HEK293 (cell line): ENCODE measurements at regions of chrX and their contacts with region 1.

Region 1: GRCh38 chrX:131677655-131678628 is 134.1 kb downstream of the OR13H1 start:
- H3K4me3 ChIP-seq: no peak overlapping the region
- H3K27ac ChIP-seq: no peak overlapping the region
- H3K4me1 ChIP-seq: no peaks in the 10 kb centered on the region
- CTCF ChIP-seq: peak; percentile 74

Region 2: DNA sequence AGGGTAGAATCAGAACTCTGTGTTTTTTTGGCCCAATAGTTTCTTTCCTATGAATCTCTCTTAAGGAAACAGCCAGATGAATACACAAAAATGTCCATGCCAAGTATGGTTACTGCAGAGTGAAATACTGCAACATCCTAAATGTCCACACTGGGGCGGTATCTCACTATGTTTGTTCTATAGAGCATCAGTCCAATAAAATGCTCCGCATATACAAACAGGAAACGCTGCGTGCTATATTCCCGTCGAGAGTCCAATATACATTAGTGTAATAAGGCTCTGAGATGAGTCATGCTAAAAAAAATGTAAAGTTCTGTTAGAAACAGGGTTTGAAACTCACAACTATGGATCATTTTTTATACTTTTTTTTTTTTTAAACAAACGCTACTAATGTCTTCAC is 702.0 kb before region 1 on chrX:
- CTCF ChIA-PET with region 1: interaction called, 34 read pairs
- POLR2A ChIA-PET with region 1: no interaction called
- H3K4me3 ChIP-seq: no peak overlapping the region
- H3K27ac ChIP-seq: no peak overlapping the region
- H3K4me1 ChIP-seq: no peaks in the 10 kb centered on the region
- CTCF ChIP-seq: peak; percentile 53; the same call in 1 of the 2 replicates

Region 3: DNA sequence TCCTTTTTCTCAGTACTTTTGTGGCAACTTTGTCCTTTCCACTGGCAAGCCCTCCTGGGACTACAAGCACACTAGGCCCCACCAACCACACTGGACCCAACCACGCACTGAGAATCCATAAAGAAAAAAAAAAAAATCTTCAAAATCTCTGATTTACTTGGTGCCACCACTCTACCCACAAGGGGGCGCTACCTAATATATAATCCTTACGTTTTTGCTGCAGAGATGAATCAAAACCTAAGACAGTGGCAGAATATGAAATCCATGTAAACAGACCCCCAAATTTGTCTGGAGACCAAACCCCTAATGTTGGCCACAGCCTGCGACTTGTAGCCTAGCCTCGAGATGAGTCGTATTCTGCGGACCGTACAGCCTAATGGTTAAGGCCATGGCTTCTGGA is 683.3 kb before region 1 on chrX:
- CTCF ChIA-PET with region 1: interaction called, 13 read pairs
- POLR2A ChIA-PET with region 1: no interaction called
- H3K4me3 ChIP-seq: no peak overlapping the region
- H3K27ac ChIP-seq: no peak overlapping the region
- H3K4me1 ChIP-seq: no peaks in the 10 kb centered on the region
- CTCF ChIP-seq: no peak

Region 4: GRCh38 chrX:131589032-131589431 is 88.9 kb before region 1 on chrX:
- CTCF ChIA-PET with region 1: no interaction called
- POLR2A ChIA-PET with region 1: no interaction called
- H3K4me3 ChIP-seq: no peak overlapping the region
- H3K27ac ChIP-seq: no peak overlapping the region
- H3K4me1 ChIP-seq: no peaks in the 10 kb centered on the region
- CTCF ChIP-seq: no peak

Region 5: DNA sequence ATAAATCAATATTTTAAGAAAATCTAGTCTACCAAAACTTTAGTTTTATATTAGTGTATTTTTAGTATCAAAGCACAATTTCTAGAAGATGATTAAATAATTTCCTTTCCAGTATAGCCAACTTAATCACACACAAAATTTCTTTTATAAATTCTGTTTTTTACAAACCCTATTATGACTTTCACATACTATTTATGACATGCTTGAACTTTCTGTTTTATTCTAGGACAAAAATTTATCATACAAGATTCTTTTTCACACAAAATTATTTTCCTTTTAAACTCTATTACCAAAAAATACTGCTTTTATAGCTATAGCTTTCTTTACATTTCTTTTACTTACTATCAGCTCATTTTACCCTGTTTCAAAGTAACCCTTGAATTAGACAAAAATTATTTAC is 15.4 kb after region 1 on chrX:
- CTCF ChIA-PET with region 1: interaction called, 37 read pairs
- POLR2A ChIA-PET with region 1: no interaction called
- H3K4me3 ChIP-seq: no peak overlapping the region
- H3K27ac ChIP-seq: no peak overlapping the region
- H3K4me1 ChIP-seq: no peaks in the 10 kb centered on the region
- CTCF ChIP-seq: no peak

Region 6: DNA sequence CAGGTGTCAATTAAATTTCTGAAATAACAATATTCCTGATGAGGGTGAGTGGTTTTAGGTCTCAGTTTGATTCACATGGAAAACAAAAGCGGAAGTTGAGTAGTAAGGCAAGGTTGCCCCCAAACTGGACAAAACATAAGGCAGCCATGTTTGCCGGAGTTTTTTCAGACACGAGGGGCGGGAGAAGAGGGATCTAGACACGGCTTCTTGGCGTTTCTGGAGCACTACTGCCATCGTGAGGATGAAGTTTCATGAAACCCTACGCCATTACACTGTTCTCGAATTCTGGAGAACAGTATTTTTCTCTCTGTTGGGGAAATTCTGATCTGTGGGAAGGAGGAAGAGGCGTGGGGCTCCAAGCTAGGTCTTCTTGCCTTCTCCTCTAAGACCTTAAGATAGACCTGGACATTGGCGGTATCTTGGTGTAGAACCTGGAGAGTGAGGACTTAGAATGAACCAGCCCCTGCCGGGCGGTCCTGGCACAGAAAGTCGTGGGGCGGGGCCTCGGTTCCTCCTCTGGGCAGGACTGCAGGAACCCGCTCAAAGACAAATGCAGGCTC is 26.3 kb after region 1 on chrX:
- CTCF ChIA-PET with region 1: interaction called, 11 read pairs
- POLR2A ChIA-PET with region 1: no interaction called
- H3K4me3 ChIP-seq: peak overlapping the region; percentile 28
- H3K27ac ChIP-seq: peak overlapping the region; percentile 68
- H3K4me1 ChIP-seq: peaks cover 3% of the 10 kb centered on the region; the same call in 1 of the 2 replicates
- CTCF ChIP-seq: peak; percentile 85

Region 7: DNA sequence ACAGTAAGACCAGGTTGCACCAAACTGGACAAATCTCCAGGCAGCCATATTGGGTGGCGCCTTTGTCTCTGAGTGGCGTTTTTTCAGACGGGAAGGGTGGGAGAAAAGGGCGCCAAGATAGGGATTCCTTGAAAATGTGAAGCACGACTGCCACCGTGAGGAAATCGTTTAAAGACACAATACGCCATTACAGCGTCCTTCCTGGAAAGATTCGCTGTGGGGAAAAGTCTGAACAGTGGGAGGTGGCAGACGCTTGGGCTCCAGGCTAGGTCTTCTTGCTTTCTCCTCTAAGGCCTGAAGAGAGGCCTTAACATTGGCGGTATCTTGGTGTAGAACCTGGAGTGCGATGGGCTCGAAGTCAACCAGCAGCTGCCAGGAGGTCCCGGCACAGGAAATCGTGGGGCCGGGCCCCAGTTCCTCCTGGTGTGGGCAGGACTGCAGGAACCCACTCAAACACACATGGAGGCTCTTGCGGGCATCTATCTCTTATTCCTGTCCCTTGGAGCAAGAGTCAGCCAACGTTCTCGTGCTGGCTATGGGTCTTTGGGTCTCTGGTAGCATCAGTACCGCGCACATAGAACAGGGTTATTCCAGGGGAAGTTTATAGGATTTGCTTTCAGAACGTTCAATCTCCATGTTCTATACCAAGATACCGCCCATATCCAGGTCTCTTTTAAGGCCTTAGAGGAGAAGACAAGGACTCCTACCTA is 74.7 kb after region 1 on chrX:
- CTCF ChIA-PET with region 1: no interaction called
- POLR2A ChIA-PET with region 1: no interaction called
- H3K4me3 ChIP-seq: peak overlapping the region; percentile 39
- H3K27ac ChIP-seq: peak overlapping the region; percentile 86
- H3K4me1 ChIP-seq: no peaks in the 10 kb centered on the region
- CTCF ChIP-seq: no peak; the same call in 1 of the 2 replicates